ENCODE measurements at regions of chr12 and their contacts with region 1.

Region 1: GRCh38 chr12:2812290-2813213 is at the start of gene ITFG2:
- DNase-seq: peak; percentile 96 to 98
- H3K4me3 ChIP-seq: peak within 1 kb of the TSS; percentile 78
- H3K27ac ChIP-seq: peak within 1 kb of the TSS; percentile 76
- H3K4me1 ChIP-seq: peaks cover 16% of the 10 kb centered on the region
- H3K27me3 ChIP-seq: no peaks in the 10 kb centered on the region
- CTCF ChIP-seq: no peak
- total RNA-seq, gene ITFG2: 33.3 and 41.3 TPM in 2 replicates

Region 2: DNA sequence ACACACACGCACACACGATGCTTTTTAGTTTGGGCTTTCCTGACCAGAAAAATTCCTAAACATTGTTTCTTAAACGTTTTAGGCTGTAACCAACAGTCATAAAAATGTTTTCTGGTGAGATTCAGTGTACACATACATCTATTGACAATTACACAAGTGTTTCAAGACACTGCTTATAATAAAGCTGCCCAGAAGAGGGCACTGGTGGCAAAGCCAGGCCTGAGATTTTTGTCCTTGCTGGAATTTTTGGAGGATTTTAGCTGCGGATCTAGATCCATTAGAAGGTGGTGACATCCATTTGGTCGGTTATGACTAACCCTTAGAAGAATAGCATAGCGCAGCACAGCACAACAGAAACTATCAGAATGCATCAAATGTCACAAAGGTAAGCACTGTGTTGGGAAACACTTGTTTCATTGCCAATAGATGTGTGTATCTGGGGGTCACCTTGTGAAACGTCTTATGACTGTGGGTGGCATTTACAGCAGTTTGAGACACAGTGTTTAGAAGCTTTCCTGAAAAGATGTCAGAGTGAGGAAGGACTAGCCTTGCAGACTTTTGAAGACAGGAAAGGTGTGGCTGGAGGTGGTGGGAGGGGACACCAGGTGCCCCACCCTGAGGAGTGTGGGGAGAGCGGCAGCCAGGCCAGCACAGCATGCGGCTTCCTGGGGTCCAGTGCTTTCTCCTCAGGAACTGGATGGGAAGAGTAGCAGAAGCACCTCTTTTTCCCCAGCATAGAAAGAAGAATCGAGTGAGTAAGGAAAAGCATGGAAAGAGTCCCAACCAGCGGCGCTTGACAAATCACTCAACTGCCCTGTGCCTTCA is 72.5 kb before region 1 on chr12:
- CTCF ChIA-PET with region 1: interaction called, 4 read pairs
- POLR2A ChIA-PET with region 1: interaction called, 6 read pairs
- intact Hi-C with region 1: loop called (anchors 1 kb)
- DNase-seq: peak; percentile 15 to 52
- H3K4me3 ChIP-seq: no peak overlapping the region
- H3K27ac ChIP-seq: no peak overlapping the region
- H3K4me1 ChIP-seq: no peaks in the 10 kb centered on the region
- H3K27me3 ChIP-seq: peaks cover 79% of the 10 kb centered on the region
- CTCF ChIP-seq: peak; percentile 86

Region 3: DNA sequence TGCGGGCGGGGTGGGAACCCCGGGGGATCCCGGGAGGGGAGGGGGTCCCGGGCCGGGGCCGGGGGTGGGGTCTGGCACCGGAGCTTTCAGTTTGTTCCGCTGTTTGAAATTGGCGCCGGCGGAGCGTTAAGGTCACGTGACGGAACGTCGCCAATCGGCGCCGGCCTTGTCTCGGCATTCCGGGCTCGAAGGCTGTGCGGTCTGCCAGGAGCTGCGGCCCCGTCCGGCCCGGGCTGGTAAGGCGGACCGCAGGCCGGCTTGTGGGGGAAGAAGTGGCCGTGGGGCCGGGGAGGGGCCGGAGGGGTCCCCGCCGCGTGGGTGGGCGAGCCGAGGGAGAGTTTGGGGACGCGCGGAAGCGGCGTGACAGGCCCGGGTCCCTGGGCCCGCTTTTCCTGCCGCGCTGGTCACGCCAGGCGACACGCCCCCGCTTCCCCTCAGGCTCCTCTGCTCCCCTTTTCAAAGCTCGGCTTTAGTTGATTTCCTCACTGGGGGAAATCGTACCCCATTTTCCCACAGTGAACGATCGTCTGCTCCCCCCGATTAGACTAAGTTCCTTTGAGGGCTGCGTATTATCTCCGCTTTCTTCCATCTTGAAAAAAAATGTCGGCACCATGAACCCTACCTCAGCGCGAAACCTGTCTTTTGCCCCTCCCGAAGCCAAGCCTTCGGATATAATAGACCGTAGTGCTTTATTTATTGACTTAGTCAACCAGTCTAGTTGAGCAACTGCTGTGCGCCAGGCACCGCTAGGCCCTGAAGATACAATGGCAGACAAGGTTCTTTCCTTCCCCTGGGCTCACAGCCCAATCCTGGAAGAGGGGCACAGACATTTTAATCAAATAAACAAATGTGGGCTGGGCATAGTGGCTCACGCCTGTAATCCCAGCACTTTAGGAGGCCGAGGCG is 64.7 kb after region 1 on chr12 and contains the starts of genes FOXM1 and RHNO1:
- CTCF ChIA-PET with region 1: no interaction called
- POLR2A ChIA-PET with region 1: interaction called, 3 read pairs
- intact Hi-C with region 1: loop called (anchors 1 kb)
- DNase-seq: peak; percentile 90 to 94
- H3K4me3 ChIP-seq: peak within 1 kb of the TSS; percentile 71
- H3K27ac ChIP-seq: peak within 1 kb of the TSS; percentile 78
- H3K4me1 ChIP-seq: peaks cover 15% of the 10 kb centered on the region; the same call in 1 of the 2 replicates
- H3K27me3 ChIP-seq: no peaks in the 10 kb centered on the region
- CTCF ChIP-seq: no peak
- total RNA-seq, gene FOXM1: 161 and 225 TPM in 2 replicates
- total RNA-seq, gene RHNO1: 60.1 and 77.9 TPM in 2 replicates

Region 4: DNA sequence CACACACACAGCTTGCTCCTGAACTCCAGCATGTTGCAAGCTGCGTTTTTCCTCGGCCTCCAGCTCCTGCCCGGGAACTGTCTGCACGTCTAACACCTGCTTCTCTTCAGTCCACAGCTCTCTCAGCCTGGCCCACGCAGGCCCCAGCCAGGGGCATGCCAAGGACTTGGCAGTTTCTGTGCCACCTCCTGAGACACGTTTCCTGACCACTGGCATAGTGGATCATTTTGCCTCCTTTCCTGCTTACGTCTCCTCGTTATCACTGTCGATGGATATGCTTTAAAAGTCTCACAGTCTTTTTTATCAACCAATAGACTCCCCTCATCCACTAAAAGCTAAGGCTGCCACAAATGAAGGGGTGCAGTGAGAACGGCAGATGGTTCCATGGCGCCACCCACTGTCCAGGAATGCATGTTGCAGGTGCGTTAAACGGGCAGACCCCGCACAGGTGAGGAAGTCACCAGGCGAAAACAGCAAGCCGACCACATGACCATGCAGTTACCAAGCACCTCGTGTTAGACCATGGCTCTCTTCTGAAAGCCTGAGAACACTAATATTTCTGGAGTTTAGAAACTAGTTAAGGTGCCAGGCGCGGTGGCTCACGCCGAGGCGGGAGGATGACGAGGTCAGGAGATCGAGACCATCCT is 132.0 kb after region 1 on chr12:
- CTCF ChIA-PET with region 1: no interaction called
- POLR2A ChIA-PET with region 1: interaction called, 19 read pairs
- intact Hi-C with region 1: no loop called
- DNase-seq: peak; percentile 60 to 81
- H3K4me3 ChIP-seq: peak overlapping the region; percentile 45; the same call in 1 of the 2 replicates
- H3K27ac ChIP-seq: no peak overlapping the region
- H3K4me1 ChIP-seq: no peaks in the 10 kb centered on the region
- H3K27me3 ChIP-seq: no peaks in the 10 kb centered on the region
- CTCF ChIP-seq: peak; percentile 95

Region 5: GRCh38 chr12:3041558-3042164 is 229.1 kb after region 1 on chr12:
- CTCF ChIA-PET with region 1: no interaction called
- POLR2A ChIA-PET with region 1: no interaction called
- intact Hi-C with region 1: loop called (anchors 1 kb)
- DNase-seq: peak; percentile 73 to 76
- H3K4me3 ChIP-seq: no peak overlapping the region
- H3K27ac ChIP-seq: no peak overlapping the region
- H3K4me1 ChIP-seq: no peaks in the 10 kb centered on the region
- H3K27me3 ChIP-seq: no peaks in the 10 kb centered on the region
- CTCF ChIP-seq: peak; percentile 87

Measured in PC-9 (cell line).